Right lobe of liver (tissue), 6 donors: ENCODE measurements at regions of chr16 and their contacts with region 1.

Region 1: DNA sequence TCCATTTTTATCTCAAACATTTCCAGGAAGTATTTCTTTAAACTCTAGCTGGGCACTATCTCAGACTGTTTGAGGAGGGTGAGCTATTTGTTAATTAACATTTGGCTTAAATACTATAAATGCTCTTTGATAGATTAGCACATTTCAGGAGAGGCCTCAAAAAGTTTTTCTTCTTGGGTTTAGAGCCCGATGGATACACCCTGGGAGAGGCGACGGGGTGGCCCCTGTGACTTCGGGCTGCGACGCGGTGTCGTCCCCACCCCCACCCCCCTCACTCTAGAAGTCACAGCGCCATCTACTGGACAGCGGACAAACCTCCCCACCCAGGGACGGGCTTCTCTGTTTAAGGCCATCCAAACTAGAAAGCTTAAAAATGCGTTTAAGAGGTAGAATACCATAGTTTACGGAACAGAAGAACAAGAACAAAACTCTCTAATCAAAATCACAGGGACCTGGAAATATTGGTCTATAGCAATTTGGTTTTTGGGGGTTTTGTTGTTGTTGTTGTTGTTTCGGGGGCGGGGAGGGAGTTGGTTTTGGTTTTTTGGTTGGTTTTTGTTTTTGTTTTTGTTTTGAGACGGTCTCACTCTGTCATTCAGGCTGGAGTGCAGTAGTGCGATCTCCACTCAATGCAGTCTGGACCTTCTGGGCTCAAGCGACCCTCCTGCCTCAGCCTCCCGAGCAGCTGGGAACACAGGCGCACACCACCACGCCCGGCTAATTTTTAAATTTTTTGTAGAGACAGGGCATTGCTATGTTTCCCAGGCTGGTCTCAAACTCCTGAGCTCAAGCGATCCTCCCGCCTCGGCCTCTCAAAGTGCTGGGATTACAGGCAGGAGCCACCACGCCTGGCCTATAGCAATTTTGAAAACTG is 254.4 kb downstream of the C16orf95 start:
- DNase-seq: peak in 2 of 3 donors; percentile 56 to 59
- ATAC-seq: peak; percentile 73 to 87 (median 74)
- H3K4me3 ChIP-seq: no peak overlapping the region
- H3K27ac ChIP-seq: no peak overlapping the region
- H3K4me1 ChIP-seq: no peaks in the 10 kb centered on the region
- H3K27me3 ChIP-seq: no peaks in the 10 kb centered on the region
- CTCF ChIP-seq: peak; percentile 49 to 68 (median 68)
- POLR2A ChIP-seq: no peak

Region 2: GRCh38 chr16:86575754-86576557 is 486.9 kb before region 1 on chr16:
- intact Hi-C with region 1: loop called in 1 of 2 experiments (anchors 10 kb)
- DNase-seq: peak in 2 of 3 donors; percentile 67 to 68
- ATAC-seq: peak; percentile 56 to 78 (median 68)
- H3K4me3 ChIP-seq: peak overlapping the region in 2 of 3 donors; percentile 21 to 43
- H3K27ac ChIP-seq: no peak overlapping the region
- H3K4me1 ChIP-seq: no peaks in the 10 kb centered on the region
- H3K27me3 ChIP-seq: peaks cover 0 to 22% of the 10 kb centered on the region in 2 donors
- CTCF ChIP-seq: peak; percentile 27 to 42 (median 39)
- POLR2A ChIP-seq: no peak